ENCODE measurements at regions of chr20 and their contacts with region 1.

Region 1: GRCh38 chr20:2767768-2768631 is 32.4 kb downstream of the CPXM1 start:
- DNase-seq: peak; percentile 85
- H3K4me3 ChIP-seq: peak overlapping the region in 1 of 3 experiments; percentile 16
- H3K27ac ChIP-seq: no peak overlapping the region
- H3K4me1 ChIP-seq: peaks cover 13% of the 10 kb centered on the region
- H3K27me3 ChIP-seq: peaks cover 8% of the 10 kb centered on the region
- CTCF ChIP-seq: no peak

Region 2: DNA sequence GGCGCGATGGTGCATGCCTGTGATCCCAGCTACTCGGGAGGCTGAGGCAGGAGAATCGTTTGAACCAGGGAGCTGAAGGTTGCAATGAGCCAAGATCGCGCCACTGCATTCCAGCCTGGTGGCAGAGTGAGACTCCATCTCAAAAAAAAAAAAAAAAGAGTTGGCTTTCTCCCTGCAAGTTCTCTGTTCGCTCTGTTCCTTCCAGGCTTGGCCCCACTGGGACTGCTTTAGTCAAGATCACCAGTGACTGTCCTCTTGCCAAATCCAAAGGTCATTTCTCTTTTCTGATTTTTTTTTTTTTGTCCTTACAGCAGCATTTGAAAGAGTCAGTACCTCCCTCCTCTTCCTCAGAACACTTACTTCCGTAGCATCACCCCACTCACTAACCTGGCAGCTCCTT is 264.6 kb after region 1 on chr20:
- CTCF ChIA-PET with region 1: no interaction called
- dilution Hi-C with region 1: loop called (anchors 10 kb)
- in situ Hi-C with region 1: no loop called
- intact Hi-C with region 1: no loop called
- DNase-seq: no peak
- H3K4me3 ChIP-seq: no peak overlapping the region
- H3K27ac ChIP-seq: no peak overlapping the region
- H3K4me1 ChIP-seq: no peaks in the 10 kb centered on the region
- H3K27me3 ChIP-seq: no peaks in the 10 kb centered on the region
- CTCF ChIP-seq: no peak

Region 3: GRCh38 chr20:3046677-3047462 is 278.9 kb after region 1 on chr20:
- CTCF ChIA-PET with region 1: no interaction called
- dilution Hi-C with region 1: no loop called
- in situ Hi-C with region 1: no loop called
- intact Hi-C with region 1: no loop called
- DNase-seq: peak; percentile 73
- H3K4me3 ChIP-seq: peak overlapping the region; percentile 68 to 93 (median 92)
- H3K27ac ChIP-seq: no peak overlapping the region
- H3K4me1 ChIP-seq: peaks cover 8% of the 10 kb centered on the region
- H3K27me3 ChIP-seq: no peaks in the 10 kb centered on the region
- CTCF ChIP-seq: no peak

Measured in mammary epithelial cell (primary cell).